ENCODE measurements at regions of chr1 and their contacts with region 1.

Region 1: DNA sequence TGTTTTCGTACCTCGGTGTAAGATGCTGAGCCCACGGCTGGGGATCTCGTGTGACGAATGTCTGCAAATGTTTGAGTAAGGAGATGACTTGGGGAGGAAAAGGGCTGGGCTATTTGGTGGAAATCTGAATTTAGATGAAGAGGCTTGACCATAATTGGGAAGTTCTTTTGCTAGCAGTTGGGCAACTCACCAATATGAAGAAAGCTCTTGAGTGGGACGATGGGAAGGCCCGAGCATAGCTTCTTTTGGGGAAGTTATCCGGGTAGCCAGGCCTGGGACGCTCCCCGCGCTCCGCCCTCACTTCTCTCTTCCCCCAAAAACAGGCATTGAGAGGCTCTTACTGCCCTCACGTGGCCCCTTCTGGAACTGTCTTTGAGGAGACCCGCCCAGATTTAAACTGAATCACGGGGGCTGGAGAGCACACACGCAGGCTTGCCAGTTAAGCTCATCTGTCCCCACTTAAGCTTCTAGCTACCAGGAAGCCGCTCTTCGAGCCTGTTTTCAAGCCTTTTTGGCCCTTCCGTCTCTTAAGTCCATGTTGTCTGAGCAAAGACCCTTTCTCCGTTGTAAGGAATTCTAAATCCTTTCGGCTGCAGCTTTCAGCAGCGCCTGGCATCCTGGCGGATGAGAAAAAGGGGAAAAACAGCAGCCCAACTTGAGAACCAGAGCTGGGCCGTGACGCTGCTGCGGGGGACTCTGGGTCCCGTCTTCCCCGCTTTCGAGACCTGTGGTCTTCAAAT is 93.1 kb downstream of the NID1 start:
- DNase-seq: peak; percentile 81 to 93 (median 89)
- ATAC-seq: peak; percentile 99
- H3K4me3 ChIP-seq: peak overlapping the region; percentile 20 to 46
- H3K4me3 Mint-ChIP-seq: peak overlapping the region; percentile 78
- H3K27ac ChIP-seq: peak overlapping the region; percentile 53 to 54
- H3K27ac Mint-ChIP-seq: peak overlapping the region; percentile 99
- H3K4me1 ChIP-seq: peaks cover 7% of the 10 kb centered on the region
- H3K4me1 Mint-ChIP-seq: peaks cover 16% of the 10 kb centered on the region
- H3K27me3 ChIP-seq: no peaks in the 10 kb centered on the region
- H3K27me3 Mint-ChIP-seq: no peaks in the 10 kb centered on the region
- CTCF ChIP-seq: peak; percentile 82

Region 2: GRCh38 chr1:235513495-235514366 is 458.0 kb before region 1 on chr1:
- CTCF ChIA-PET with region 1: interaction called, 16 read pairs
- POLR2A ChIA-PET with region 1: no interaction called
- intact Hi-C with region 1: loop called (anchors 1 to 2 kb)
- DNase-seq: peak in 5 of 9 experiments; percentile 14 to 77 (median 54)
- ATAC-seq: peak; percentile 55
- H3K4me3 ChIP-seq: no peak overlapping the region
- H3K4me3 Mint-ChIP-seq: no peak overlapping the region
- H3K27ac ChIP-seq: no peak overlapping the region
- H3K27ac Mint-ChIP-seq: no peak overlapping the region
- H3K4me1 ChIP-seq: no peaks in the 10 kb centered on the region
- H3K4me1 Mint-ChIP-seq: no peaks in the 10 kb centered on the region
- H3K27me3 ChIP-seq: no peaks in the 10 kb centered on the region
- H3K27me3 Mint-ChIP-seq: peaks cover 13% of the 10 kb centered on the region
- CTCF ChIP-seq: peak; percentile 94

Region 3: GRCh38 chr1:235802947-235803346 is 168.8 kb before region 1 on chr1:
- CTCF ChIA-PET with region 1: interaction called, 15 read pairs
- POLR2A ChIA-PET with region 1: no interaction called
- intact Hi-C with region 1: loop called in 1 of 2 experiments (anchors 5 kb)
- DNase-seq: no peak
- ATAC-seq: no peak
- H3K4me3 ChIP-seq: no peak overlapping the region
- H3K4me3 Mint-ChIP-seq: no peak overlapping the region
- H3K27ac ChIP-seq: no peak overlapping the region
- H3K27ac Mint-ChIP-seq: no peak overlapping the region
- H3K4me1 ChIP-seq: no peaks in the 10 kb centered on the region
- H3K4me1 Mint-ChIP-seq: no peaks in the 10 kb centered on the region
- H3K27me3 ChIP-seq: no peaks in the 10 kb centered on the region
- H3K27me3 Mint-ChIP-seq: no peaks in the 10 kb centered on the region
- CTCF ChIP-seq: no peak

Region 4: GRCh38 chr1:235843461-235843961 is 128.2 kb before region 1 on chr1:
- CTCF ChIA-PET with region 1: interaction called, 19 read pairs
- POLR2A ChIA-PET with region 1: interaction called, 4 read pairs
- intact Hi-C with region 1: no loop called
- DNase-seq: peak in 2 of 9 experiments; percentile 44 to 64
- ATAC-seq: peak; percentile 81
- H3K4me3 ChIP-seq: no peak overlapping the region
- H3K4me3 Mint-ChIP-seq: no peak overlapping the region
- H3K27ac ChIP-seq: no peak overlapping the region
- H3K27ac Mint-ChIP-seq: no peak overlapping the region
- H3K4me1 ChIP-seq: peaks cover 14% of the 10 kb centered on the region
- H3K4me1 Mint-ChIP-seq: peaks cover 76% of the 10 kb centered on the region
- H3K27me3 ChIP-seq: no peaks in the 10 kb centered on the region
- H3K27me3 Mint-ChIP-seq: no peaks in the 10 kb centered on the region
- CTCF ChIP-seq: peak; percentile 65

Region 5: DNA sequence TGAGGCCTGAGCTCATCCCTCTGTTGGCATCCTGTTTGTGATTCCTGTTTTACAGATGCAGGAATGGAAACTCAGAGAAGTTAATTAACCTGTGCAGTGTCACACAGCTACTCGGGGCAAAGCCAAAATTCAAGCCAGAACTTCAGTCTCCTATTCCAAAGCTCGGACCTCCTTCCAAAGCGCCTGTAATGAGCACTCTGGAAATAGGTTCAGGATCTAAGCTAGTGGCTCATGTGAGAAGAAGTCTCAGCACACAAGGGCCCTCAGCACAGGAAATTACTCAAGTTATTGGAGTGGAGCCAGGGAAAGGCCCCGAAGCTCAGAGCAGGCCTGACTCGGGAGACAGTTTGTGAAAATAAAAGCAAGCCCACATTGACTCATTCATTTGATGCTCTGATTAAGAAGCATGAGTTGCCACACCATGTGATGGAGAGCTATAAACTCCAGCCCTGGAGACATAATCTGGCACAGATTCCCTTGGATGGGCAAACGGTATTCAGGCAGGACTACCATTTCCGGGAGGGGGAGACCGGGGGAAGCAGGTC is 54.4 kb before region 1 on chr1:
- CTCF ChIA-PET with region 1: interaction called, 18 read pairs
- POLR2A ChIA-PET with region 1: interaction called, 3 read pairs
- intact Hi-C with region 1: loop called in 1 of 2 experiments (anchors 2 kb)
- DNase-seq: peak; percentile 8 to 87 (median 59)
- ATAC-seq: peak; percentile 94
- H3K4me3 ChIP-seq: no peak overlapping the region
- H3K4me3 Mint-ChIP-seq: no peak overlapping the region
- H3K27ac ChIP-seq: no peak overlapping the region
- H3K27ac Mint-ChIP-seq: peak overlapping the region; percentile 84
- H3K4me1 ChIP-seq: peaks cover 7% of the 10 kb centered on the region
- H3K4me1 Mint-ChIP-seq: peaks cover 11% of the 10 kb centered on the region
- H3K27me3 ChIP-seq: no peaks in the 10 kb centered on the region
- H3K27me3 Mint-ChIP-seq: no peaks in the 10 kb centered on the region
- CTCF ChIP-seq: no peak

Region 6: GRCh38 chr1:235984041-235984825 is 12.5 kb after region 1 on chr1:
- CTCF ChIA-PET with region 1: interaction called, 21 read pairs
- POLR2A ChIA-PET with region 1: no interaction called
- intact Hi-C with region 1: no loop called
- DNase-seq: no peak
- ATAC-seq: no peak
- H3K4me3 ChIP-seq: no peak overlapping the region
- H3K4me3 Mint-ChIP-seq: no peak overlapping the region
- H3K27ac ChIP-seq: no peak overlapping the region
- H3K27ac Mint-ChIP-seq: no peak overlapping the region
- H3K4me1 ChIP-seq: no peaks in the 10 kb centered on the region
- H3K4me1 Mint-ChIP-seq: no peaks in the 10 kb centered on the region
- H3K27me3 ChIP-seq: no peaks in the 10 kb centered on the region
- H3K27me3 Mint-ChIP-seq: peaks cover 4% of the 10 kb centered on the region
- CTCF ChIP-seq: no peak

Region 7: DNA sequence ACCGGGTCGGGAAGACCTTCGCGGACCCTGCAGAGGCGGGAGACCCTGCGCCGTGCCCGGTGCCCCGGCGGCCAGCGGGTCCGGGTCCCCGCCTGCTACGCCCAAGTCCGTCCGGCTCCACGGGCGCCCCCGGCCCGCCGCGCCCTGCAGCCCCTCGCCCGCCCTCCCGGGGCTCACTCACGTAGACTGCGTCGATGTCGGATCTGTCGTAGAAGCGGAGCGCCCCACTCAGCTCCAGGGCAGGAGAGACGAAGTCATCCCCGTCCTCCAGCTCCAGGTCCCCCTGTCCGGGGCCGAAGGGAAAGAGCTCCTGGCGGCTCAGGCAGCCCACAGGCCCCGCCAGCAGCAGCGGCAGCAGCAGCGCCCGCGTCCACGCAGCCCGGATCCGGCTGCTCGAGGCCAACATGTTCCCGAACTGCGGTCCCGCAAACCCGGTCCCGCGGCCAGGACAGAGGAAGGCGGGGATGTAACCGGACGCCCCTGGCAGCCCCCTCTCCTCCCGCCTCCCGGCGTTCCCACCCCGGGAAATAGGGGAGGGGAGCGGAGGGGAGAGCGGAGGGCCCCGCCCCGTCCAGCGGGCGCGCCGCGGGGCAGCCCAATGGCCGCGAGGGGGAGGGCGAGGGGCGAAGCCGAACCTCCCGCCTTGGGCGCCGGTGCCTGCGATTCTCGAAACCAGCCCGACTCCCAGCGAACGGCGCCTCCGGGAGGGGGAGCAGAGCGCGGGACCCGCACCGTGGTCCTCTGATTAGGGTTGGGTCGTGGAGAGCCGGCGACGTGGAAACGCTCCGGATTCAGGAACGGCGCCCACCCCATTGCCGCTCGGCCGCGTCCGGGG is 93.2 kb after region 1 on chr1 and contains the start of gene NID1:
- CTCF ChIA-PET with region 1: no interaction called
- POLR2A ChIA-PET with region 1: no interaction called
- intact Hi-C with region 1: no loop called
- DNase-seq: peak in 5 of 9 experiments; percentile 15 to 52 (median 31)
- ATAC-seq: peak; percentile 13
- H3K4me3 ChIP-seq: peak within 1 kb of the TSS; percentile 37 to 39
- H3K4me3 Mint-ChIP-seq: peak within 1 kb of the TSS; percentile 72
- H3K27ac ChIP-seq: no peak within 1 kb of the TSS
- H3K27ac Mint-ChIP-seq: no peak within 1 kb of the TSS
- H3K4me1 ChIP-seq: peaks cover 32% of the 10 kb centered on the region
- H3K4me1 Mint-ChIP-seq: peaks cover 22% of the 10 kb centered on the region
- H3K27me3 ChIP-seq: peaks cover 20 to 22% of the 10 kb centered on the region in 2 experiments
- H3K27me3 Mint-ChIP-seq: peaks cover 45% of the 10 kb centered on the region
- CTCF ChIP-seq: no peak
- total RNA-seq, gene NID1: not detected